ENCODE measurements at regions of chr20 and their contacts with region 1.

Region 1: DNA sequence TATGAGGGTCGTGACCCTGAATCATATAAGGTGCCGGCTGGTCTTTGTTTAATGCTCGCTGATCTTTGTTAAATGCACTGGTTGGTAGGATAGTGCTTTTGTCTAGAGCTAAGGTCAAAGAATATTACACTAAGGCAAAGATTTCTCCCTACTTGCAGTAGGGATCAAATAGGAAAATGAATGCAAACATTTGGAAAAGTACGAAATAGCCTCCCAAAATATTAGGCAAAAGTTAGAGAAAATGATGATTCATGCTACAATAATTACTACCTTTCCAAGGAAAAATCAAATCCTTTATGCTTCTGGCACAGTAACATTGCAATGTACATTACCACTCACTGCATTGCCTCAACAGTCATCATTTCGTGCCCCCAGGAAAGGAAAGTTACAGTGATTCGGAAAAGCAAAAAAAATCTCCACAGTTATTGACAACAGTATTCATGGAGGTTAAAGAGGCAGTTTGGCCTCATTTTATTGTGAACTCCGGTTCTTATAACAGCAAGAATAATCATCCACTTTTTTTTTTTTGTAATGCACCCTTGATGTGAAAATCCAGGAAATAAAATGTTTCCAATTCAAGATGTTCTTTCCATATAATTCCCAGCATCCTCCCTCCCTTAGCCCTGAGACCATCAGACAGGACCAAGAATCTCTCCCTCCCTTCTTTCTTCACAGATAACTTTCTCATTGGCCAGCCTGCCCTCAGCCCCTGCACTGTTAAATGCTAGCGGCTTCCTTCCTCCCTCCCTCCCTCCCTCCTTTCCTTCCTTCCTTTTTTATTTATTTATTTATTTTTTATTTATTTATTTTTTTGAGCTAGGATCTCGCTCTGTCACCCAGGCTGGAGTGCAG is 61.8 kb upstream of the ZMYND8 start:
- DNase-seq: no peak
- H3K4me3 ChIP-seq: no peak overlapping the region
- H3K4me3 Mint-ChIP-seq: no peak overlapping the region
- H3K27ac ChIP-seq: no peak overlapping the region
- H3K27ac Mint-ChIP-seq: peak overlapping the region in 2 of 7 donors; percentile 19 to 63
- H3K4me1 ChIP-seq: peaks cover 57 to 67% of the 10 kb centered on the region in 2 donors
- H3K4me1 Mint-ChIP-seq: peaks cover 59% of the 10 kb centered on the region
- H3K27me3 ChIP-seq: no peaks in the 10 kb centered on the region
- H3K27me3 Mint-ChIP-seq: peaks cover 0 to 2% (median 0%) of the 10 kb centered on the region in 3 donors
- CTCF ChIP-seq: no peak

Region 2: DNA sequence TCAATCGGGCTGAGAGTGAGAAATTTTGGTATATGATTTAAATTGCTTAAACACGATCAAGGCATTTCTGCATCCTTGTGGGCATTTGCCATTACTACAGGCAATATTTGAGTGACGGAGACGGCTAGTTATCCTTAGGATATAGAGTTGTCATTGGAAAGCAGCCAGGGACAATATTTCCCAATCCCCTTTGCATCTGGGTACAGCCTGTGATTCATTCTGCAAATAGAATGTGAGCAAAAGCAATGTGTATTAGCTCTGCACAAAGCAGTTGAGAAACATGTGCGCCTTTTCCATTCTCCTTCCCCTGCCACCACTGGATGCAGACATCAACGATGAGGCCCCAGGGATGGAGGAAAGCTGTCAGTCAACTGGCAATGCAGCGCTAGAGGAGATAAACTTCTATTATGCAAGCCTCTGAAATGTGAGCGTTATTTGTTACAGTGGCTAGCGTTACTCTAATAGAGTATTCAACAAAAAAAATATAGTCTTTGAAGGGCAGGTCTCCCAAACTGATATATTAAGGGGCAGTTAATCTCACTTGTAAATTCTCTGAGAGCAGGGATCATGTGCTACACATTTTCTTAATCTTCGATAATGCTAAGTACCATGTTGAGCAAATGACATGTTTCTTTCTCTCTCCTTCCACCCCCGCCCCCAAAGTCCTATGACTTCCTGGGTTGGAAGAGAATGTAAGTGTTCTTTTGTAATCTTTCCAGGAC is 46.3 kb after region 1 on chr20:
- intact Hi-C with region 1: no loop called
- DNase-seq: peak; percentile 67 to 82 (median 80)
- H3K4me3 ChIP-seq: no peak overlapping the region
- H3K4me3 Mint-ChIP-seq: no peak overlapping the region
- H3K27ac ChIP-seq: no peak overlapping the region
- H3K27ac Mint-ChIP-seq: peak overlapping the region in 2 of 7 donors; percentile 24 to 56
- H3K4me1 ChIP-seq: peaks cover 20 to 25% of the 10 kb centered on the region in 2 donors
- H3K4me1 Mint-ChIP-seq: peaks cover 30% of the 10 kb centered on the region
- H3K27me3 ChIP-seq: no peaks in the 10 kb centered on the region
- H3K27me3 Mint-ChIP-seq: peaks cover 0 to 6% (median 2%) of the 10 kb centered on the region in 3 donors
- CTCF ChIP-seq: peak; percentile 58

Region 3: DNA sequence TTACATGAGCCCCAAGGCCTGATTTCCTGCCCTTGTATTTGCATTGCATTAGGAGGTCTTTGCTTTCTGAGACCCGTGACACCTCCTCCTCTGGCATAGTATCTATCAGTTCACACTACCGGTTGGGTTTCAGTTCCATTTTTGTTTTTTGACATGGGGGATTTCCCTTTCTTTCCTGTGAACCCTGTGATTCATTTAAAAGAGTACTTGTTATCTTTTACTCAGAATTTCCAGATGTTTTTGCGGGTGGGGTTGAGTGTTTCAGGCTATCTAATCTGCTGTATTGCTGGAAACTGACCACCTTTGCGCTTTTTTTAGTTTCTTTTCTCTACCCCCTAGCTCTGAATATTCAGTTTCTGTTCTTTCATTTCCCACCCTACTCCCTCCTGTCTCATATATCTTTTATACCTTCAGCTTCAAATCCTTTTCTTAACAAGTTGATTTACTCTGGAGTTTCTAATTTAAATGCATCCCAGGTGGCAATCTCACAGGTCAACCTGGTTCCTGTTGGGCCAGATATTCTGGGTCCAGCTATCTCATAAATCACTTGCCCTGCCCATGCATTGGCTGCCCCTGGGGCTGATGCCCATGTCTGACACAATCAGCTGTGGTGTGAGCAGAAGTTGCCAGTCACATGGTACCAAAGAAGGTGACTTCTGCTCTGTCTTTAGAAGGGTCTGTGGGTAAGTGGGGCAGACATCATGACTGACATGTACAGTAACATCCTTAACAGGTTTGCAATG is 69.1 kb after region 1 on chr20:
- intact Hi-C with region 1: loop called in 1 of 2 experiments (anchors 5 kb)
- DNase-seq: peak; percentile 35 to 75 (median 67)
- H3K4me3 ChIP-seq: peak overlapping the region in 1 of 3 experiments; percentile 0
- H3K4me3 Mint-ChIP-seq: peak overlapping the region in 1 of 2 donors; percentile 36
- H3K27ac ChIP-seq: peak overlapping the region; percentile 9 to 47
- H3K27ac Mint-ChIP-seq: peak overlapping the region; percentile 84 to 89 (median 88)
- H3K4me1 ChIP-seq: peaks cover 38 to 47% of the 10 kb centered on the region in 2 donors
- H3K4me1 Mint-ChIP-seq: peaks cover 33% of the 10 kb centered on the region
- H3K27me3 ChIP-seq: no peaks in the 10 kb centered on the region
- H3K27me3 Mint-ChIP-seq: peaks cover 0 to 13% (median 1%) of the 10 kb centered on the region in 3 donors
- CTCF ChIP-seq: no peak

Region 4: GRCh38 chr20:47501483-47502270 is 83.4 kb after region 1 on chr20 and contains the start of gene NCOA3:
- intact Hi-C with region 1: loop called in 1 of 2 experiments (anchors 5 kb)
- DNase-seq: peak; percentile 73 to 83 (median 80)
- H3K4me3 ChIP-seq: peak within 1 kb of the TSS; percentile 93 to 98 (median 98)
- H3K4me3 Mint-ChIP-seq: peak within 1 kb of the TSS; percentile 95 to 97
- H3K27ac ChIP-seq: peak within 1 kb of the TSS; percentile 95 to 96
- H3K27ac Mint-ChIP-seq: peak within 1 kb of the TSS; percentile 90 to 98 (median 95)
- H3K4me1 ChIP-seq: peaks cover 19 to 28% of the 10 kb centered on the region in 2 donors
- H3K4me1 Mint-ChIP-seq: peaks cover 35% of the 10 kb centered on the region
- H3K27me3 ChIP-seq: no peaks in the 10 kb centered on the region
- H3K27me3 Mint-ChIP-seq: peaks cover 0 to 2% (median 0%) of the 10 kb centered on the region in 3 donors
- CTCF ChIP-seq: peak; percentile 65
- polyA plus RNA-seq, gene NCOA3: 13.5 to 21.8 (median 21.3) TPM